Thyroid gland (tissue), 4 donors: ENCODE measurements at regions of chr6 and their contacts with region 1.

Region 1: DNA sequence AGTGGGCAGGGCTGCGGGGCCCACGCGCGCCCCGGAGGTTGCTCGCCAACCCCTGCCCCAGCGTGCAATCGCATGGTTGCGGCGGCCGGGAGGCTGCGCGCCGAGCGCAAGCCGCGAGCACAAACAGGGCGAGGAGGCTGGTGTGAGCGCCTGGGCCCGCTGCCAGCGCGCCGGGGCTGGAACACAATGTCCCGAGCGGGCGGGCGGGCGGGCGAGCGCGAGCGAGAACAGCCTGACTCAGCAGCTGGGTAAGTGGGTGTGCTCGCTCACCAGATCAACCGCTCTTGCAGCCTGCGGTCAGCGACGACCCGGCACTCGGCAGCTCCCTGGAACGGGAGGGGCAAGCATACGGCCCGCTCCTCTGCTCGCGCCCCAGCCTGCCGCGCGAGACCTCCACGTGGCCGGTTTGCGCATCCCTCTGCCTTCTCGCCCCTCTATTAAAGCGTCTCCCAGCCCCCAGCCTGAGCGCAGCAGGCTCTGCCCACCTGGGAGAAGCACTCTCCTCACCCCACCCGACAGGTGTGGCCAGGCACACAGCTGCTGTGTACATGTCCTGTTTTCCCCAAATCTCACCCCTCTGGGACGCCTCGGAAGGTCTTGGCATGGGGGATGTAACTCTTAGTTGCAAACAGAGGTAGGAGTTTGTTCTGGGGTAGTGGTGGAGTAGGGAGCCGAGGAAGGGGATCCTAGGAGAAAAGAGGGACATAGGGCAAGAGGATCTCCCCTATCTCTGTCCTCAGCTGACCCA is 8.7 kb upstream of the ARMC12 start:
- DNase-seq: peak; percentile 96 to 97
- H3K4me3 ChIP-seq: peak overlapping the region in 1 of 3 donors; percentile 28
- H3K27ac ChIP-seq: peak overlapping the region; percentile 99 to 100 (median 99)
- H3K4me1 ChIP-seq: peaks cover 82 to 93% of the 10 kb centered on the region in 2 donors
- H3K27me3 ChIP-seq: no peaks in the 10 kb centered on the region
- CTCF ChIP-seq: peak in 2 of 6 experiments; percentile 8 to 19
- POLR2A ChIP-seq: peak; percentile 52 to 81

Region 2: GRCh38 chr6:35213824-35214756 is 514.0 kb before region 1 on chr6 and contains the start of gene SCUBE3:
- intact Hi-C with region 1: no loop called
- DNase-seq: peak; percentile 56 to 71
- H3K4me3 ChIP-seq: peak within 1 kb of the TSS; percentile 49 to 59 (median 57)
- H3K27ac ChIP-seq: peak within 1 kb of the TSS; percentile 44 to 90 (median 79)
- H3K4me1 ChIP-seq: peaks cover 38 to 51% of the 10 kb centered on the region in 2 donors
- H3K27me3 ChIP-seq: no peaks in the 10 kb centered on the region
- CTCF ChIP-seq: no peak
- POLR2A ChIP-seq: peak in 1 of 2 donors; percentile 77
- total RNA-seq, gene SCUBE3: 45.5 to 119 (median 66.3) TPM

Region 3: DNA sequence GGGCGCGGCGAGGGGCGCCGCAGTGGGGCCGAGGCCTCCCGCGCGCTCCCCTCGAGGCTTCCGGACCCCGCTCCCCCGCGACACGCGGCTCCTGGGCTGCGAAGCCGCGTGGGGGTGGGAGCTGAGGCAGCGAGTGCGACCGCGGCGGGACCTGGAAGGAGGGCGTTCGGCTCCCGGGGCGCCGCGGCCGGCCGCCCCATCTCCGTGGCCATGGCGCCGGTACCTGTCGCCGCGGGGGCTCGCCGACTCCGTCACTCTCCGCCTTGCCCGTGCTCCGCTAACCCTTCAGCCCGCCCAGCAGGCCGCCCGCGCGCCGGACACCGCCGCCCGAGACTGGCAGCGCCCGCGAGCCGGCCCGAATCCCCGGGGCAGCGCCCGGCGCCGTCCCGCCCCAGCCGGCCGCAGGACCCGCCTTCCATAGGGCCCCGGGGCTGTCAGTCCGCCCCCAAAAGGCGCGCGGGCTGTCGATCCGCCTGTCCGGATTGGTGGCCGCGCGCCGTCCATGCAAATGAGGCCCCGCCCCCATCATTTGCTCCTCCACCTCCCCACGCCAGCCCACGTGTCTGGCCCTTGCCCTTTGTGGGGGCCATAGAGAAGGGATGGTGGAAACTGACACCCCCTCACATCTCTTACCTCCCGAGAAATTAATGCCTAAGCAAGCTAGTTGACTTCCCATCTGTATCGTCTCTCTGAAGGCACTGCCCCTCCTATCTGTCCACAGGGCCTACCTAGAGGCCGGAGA is 39.4 kb before region 1 on chr6 and contains the start of gene FKBP5:
- intact Hi-C with region 1: loop called (anchors 5 kb)
- DNase-seq: peak; percentile 98 to 99
- H3K4me3 ChIP-seq: peak within 1 kb of the TSS; percentile 50 to 98 (median 94)
- H3K27ac ChIP-seq: peak within 1 kb of the TSS; percentile 94 to 100 (median 99)
- H3K4me1 ChIP-seq: peaks cover 19 to 25% of the 10 kb centered on the region in 2 donors
- H3K27me3 ChIP-seq: no peaks in the 10 kb centered on the region
- CTCF ChIP-seq: no peak
- POLR2A ChIP-seq: peak; percentile 98 to 100
- total RNA-seq, gene FKBP5: 239 to 600 (median 253) TPM